ENCODE measurements at regions of chr1 and their contacts with region 1.

Region 1: DNA sequence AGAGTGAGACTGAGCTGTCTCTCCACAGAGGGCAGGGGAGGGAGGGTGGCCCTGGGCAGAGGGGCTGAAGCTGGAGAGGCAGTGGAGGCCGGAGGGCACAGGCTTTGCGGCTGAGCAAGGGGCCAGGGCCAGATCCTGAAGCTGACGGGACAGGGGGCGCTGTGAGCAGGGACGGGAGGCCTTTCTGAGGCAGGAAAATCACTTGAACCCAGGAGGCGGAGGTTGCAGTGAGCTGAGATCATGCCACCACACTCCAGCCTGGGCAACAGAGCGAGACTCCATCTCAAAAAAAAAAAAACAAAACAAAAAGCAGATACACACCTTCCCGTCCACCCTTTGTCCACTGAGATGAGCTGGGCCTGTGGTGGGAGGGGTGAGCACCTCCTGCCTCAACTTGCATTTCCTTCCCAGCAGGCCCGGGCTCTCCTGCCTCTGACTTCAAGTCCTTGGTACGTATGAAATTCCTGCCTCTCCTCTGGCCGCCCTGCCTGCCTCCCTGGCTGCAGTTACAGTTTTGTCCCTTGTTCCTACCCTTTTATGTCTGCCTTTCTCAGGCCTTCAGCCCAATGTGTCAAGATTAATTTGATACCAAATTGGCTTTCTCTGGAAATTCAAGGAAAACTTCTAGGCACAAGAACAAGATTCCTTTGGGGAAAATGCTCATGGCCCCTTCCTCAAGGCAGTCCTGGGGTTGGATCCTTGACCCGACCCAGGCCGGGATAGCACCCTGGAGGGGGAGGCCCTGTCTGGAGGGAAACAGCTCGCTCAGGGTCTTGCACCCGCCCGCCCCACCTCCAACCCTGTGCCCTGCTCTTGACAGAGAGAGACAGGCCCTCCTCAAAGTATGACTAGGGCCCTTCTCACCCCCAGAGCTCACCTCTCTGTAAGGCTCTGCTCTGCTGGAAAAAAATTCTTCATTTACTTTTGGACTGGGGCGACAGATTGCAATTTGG is 11.2 kb upstream of the ADAMTSL4 start:
- DNase-seq: no peak
- ATAC-seq: peak; percentile 16; the same call in 1 of the 3 replicates
- H3K4me3 ChIP-seq: no peak overlapping the region
- H3K27ac ChIP-seq: no peak overlapping the region
- H3K4me1 ChIP-seq: no peaks in the 10 kb centered on the region
- H3K27me3 ChIP-seq: no peaks in the 10 kb centered on the region
- CTCF ChIP-seq: no peak
- EP300 ChIP-seq: no peak
- POLR2A ChIP-seq: no peak
- RAD21 ChIP-seq: no peak

Region 2: DNA sequence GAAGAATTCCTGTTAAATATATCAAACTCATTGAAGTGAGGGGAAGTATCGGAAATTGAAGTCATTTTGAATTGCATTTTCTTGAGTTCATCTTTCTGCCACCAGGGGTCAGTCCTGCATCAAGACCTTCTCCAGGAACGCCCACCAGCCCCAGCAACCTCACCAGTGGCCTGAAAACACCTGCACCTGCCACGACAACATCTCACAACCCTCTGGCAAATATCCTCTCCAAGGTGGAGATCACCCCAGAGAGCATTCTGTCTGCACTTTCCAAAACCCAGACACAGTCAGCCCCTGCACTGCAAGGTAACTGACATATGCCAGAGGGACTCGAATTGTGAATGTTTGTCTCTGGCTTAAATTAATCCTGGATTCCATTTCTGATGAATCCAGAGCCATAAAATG is 73.6 kb before region 1 on chr1:
- CTCF ChIA-PET with region 1: interaction called, 13 read pairs
- POLR2A ChIA-PET with region 1: no interaction called
- RAD21 ChIA-PET with region 1: interaction called, 8 read pairs
- SMC1A ChIA-PET with region 1: interaction called, 7 read pairs
- in situ Hi-C with region 1: no loop called
- intact Hi-C with region 1: loop called (anchors 1 kb)
- DNase-seq: no peak
- ATAC-seq: peak; percentile 82
- H3K4me3 ChIP-seq: no peak overlapping the region
- H3K27ac ChIP-seq: no peak overlapping the region
- H3K4me1 ChIP-seq: no peaks in the 10 kb centered on the region
- H3K27me3 ChIP-seq: no peaks in the 10 kb centered on the region
- CTCF ChIP-seq: peak; percentile 70 to 85 (median 72)
- EP300 ChIP-seq: no peak
- POLR2A ChIP-seq: no peak
- RAD21 ChIP-seq: peak; percentile 77